ENCODE measurements at regions of chr2 and their contacts with region 1.

Region 1: DNA sequence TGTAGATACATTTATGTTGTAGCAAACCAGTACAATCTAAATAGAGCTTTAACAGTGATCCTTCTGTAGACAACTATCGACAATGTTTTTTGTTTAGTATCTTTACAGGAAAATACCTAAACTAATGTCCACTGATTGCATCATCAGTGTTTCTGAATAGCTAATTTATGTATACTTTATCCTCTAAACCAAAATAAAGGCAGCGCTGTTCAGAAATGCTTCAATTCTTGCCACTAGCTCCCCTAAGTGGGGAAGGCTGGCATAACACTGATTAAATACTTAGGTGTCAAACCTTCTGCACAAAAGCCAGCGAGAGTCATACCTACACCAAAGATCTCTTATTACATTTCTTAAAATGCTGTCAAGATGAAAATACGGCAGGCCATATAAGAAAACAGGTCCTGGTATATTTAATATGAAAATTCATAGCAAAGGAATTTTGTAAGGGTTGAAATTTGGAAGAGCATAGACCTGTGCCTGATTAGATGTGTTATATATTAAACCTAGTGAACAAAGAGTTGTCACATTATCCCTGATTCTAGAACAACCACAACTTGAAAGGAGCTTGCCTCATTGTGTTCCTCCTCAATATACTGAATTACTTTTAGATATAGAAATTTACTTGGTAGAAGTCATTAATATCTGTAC is 1693.4 kb upstream of the SLC39A10 start:
- DNase-seq: peak in 1 of 2 experiments; percentile 50
- H3K4me3 ChIP-seq: no peak overlapping the region
- H3K27ac ChIP-seq: no peak overlapping the region
- H3K4me1 ChIP-seq: peaks cover 0 to 8% (median 0%) of the 10 kb centered on the region in 4 experiments; a peak in 1 of 7 replicates
- H3K27me3 ChIP-seq: peaks cover 0 to 1% (median 0%) of the 10 kb centered on the region in 4 experiments; a peak in 1 of 7 replicates
- CTCF ChIP-seq: peak in 2 of 3 experiments; percentile 58 to 67; a peak in 3 of 4 replicates
- EP300 ChIP-seq: no peak
- POLR2A ChIP-seq: no peak
- RAD21 ChIP-seq: peak; percentile 75 to 77

Region 2: GRCh38 chr2:193935114-193935513 is 28.5 kb before region 1 on chr2:
- CTCF ChIA-PET with region 1: interaction called, 14 read pairs
- POLR2A ChIA-PET with region 1: no interaction called
- DNase-seq: no peak
- H3K4me3 ChIP-seq: no peak overlapping the region
- H3K27ac ChIP-seq: no peak overlapping the region
- H3K4me1 ChIP-seq: no peaks in the 10 kb centered on the region
- H3K27me3 ChIP-seq: no peaks in the 10 kb centered on the region
- CTCF ChIP-seq: peak in 1 of 3 experiments; percentile 35; a peak in 1 of 4 replicates
- EP300 ChIP-seq: no peak
- POLR2A ChIP-seq: no peak
- RAD21 ChIP-seq: peak; percentile 16 to 21; a peak in 2 of 4 replicates

Region 3: DNA sequence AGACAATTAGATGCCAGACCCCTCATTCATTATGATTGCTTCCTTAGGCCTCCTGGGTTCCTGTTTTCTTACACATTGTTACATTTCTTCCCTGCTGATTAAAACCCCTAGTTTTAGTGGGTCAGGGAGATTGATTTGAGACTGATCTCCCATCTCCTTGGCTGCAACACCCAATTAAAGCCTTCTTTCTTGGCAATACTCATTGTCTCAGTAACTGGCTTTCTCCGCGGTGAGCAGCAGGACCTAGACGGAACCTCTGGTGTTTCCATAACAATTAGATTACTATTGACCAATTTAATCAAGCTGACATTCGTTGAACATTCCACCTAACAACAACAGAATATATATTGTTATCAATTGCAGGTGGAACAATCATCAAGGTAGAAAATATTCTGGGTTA is 17.0 kb after region 1 on chr2:
- CTCF ChIA-PET with region 1: no interaction called
- POLR2A ChIA-PET with region 1: no interaction called
- DNase-seq: no peak
- H3K4me3 ChIP-seq: no peak overlapping the region
- H3K27ac ChIP-seq: no peak overlapping the region
- H3K4me1 ChIP-seq: peaks cover 0 to 2% (median 0%) of the 10 kb centered on the region in 4 experiments; a peak in 2 of 7 replicates
- H3K27me3 ChIP-seq: no peaks in the 10 kb centered on the region
- CTCF ChIP-seq: no peak
- EP300 ChIP-seq: no peak
- POLR2A ChIP-seq: no peak
- RAD21 ChIP-seq: no peak